ENCODE measurements at regions of chr5 and their contacts with region 1.

Region 1: GRCh38 chr5:168513861-168514428 is 15.2 kb upstream of the FBLL1 start:
- DNase-seq: no peak
- H3K4me3 ChIP-seq: no peak overlapping the region
- H3K27ac ChIP-seq: no peak overlapping the region
- H3K4me1 ChIP-seq: no peaks in the 10 kb centered on the region
- H3K27me3 ChIP-seq: no peaks in the 10 kb centered on the region
- CTCF ChIP-seq: no peak
- POLR2A ChIP-seq: no peak

Region 2: DNA sequence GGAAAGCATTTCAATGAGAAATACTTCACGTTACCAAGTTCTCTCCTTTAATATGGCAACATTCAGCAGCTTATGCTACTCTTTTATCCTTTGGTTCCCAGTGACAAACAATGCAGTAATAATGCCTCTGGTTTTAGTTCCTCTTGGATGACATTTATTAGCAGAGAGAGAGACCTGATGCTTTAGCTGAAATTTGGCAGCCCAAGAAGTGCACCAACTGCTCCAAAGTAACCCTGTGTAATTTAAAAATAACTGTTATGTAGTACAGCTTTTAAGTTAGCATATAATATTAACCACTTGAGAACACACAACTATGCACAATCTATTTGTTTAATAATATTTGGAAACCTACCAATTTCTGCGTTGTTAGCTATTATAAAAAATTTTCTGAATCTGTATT is 43.4 kb after region 1 on chr5:
- CTCF ChIA-PET with region 1: no interaction called
- POLR2A ChIA-PET with region 1: no interaction called
- dilution Hi-C with region 1: no loop called
- intact Hi-C with region 1: loop called (anchors 5 kb)
- DNase-seq: no peak
- H3K4me3 ChIP-seq: no peak overlapping the region
- H3K27ac ChIP-seq: no peak overlapping the region
- H3K4me1 ChIP-seq: no peaks in the 10 kb centered on the region
- H3K27me3 ChIP-seq: no peaks in the 10 kb centered on the region
- CTCF ChIP-seq: no peak
- POLR2A ChIP-seq: no peak

Measured in endothelial cell of umbilical vein (primary cell).